Left colon (tissue), 2 donors: ENCODE measurements at regions of chr1 and their contacts with region 1.

Region 1: DNA sequence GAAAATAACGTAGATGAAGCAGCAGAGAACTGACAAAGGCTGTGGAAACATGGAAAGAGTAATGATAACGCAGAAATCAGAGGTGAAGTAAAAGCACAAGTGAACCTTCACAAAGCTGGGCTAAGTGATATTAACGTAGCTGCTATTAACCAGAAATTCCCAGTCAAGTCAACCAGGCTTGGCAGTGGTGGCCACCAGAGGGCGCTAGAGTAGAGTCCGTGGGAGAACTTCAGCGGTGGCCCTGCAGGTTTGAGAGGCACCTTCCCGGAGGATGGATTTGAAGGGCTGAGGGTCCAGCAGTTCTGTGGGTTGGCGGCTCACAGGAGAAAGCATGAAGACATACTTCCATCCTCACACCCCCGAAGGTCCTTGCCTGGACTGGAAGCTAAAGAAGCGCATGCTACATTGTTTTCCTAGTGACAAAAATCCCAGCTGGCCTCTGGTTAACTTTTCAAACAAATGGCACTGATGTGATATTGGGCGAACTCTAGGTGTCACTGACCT is 81.7 kb upstream of the ZNF648 start:
- DNase-seq: peak; percentile 87 to 96
- ATAC-seq: peak; percentile 79

Region 2: GRCh38 chr1:182299728-182300616 is 156.8 kb after region 1 on chr1:
- intact Hi-C with region 1: loop called in 1 of 2 experiments (anchors 10 kb)
- DNase-seq: peak; percentile 60 to 82
- ATAC-seq: peak; percentile 76

Region 3: GRCh38 chr1:182397771-182398393 is 254.7 kb after region 1 on chr1:
- intact Hi-C with region 1: loop called in 1 of 2 experiments (anchors 5 kb)
- DNase-seq: no peak
- ATAC-seq: peak; percentile 34